Dendritic cell treated with granulocyte-macrophage colony-stimulating factor and Interleukin-4, amounts not matched to agents 40 ng/mL and 50 ng/mL, for 4 days (primary cell): ENCODE measurements at regions of chr16 and their contacts with region 1.

Region 1: DNA sequence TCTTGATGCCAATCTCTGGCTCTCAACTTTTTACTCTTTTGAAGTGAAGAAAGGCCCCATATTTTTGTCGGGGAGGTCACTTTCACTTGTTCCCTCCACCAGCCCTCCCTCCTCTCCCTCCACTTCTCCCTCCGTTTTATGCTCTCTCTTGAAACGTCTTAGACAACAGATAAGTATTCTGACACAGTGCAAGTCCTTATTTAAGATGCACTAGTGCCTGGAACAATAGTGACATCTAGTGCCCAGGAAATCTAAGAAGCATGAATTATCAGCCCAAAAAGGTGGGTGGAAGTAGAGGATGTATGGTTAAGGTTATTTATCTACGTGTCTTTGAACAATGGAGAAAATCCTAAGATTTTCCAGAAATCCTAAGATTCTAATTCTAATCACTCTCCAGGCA is 17.9 kb downstream of the PSME3IP1 start:
- H3K4me3 Mint-ChIP-seq: no peak overlapping the region
- H3K27ac Mint-ChIP-seq: no peak overlapping the region
- H3K4me1 Mint-ChIP-seq: peaks cover 24% of the 10 kb centered on the region
- H3K27me3 Mint-ChIP-seq: no peaks in the 10 kb centered on the region

Region 2: GRCh38 chr16:56964243-56965148 is 203.5 kb before region 1 on chr16:
- intact Hi-C with region 1: loop called (anchors 10 kb)
- H3K4me3 Mint-ChIP-seq: no peak overlapping the region
- H3K27ac Mint-ChIP-seq: peak overlapping the region; percentile 76
- H3K4me1 Mint-ChIP-seq: peaks cover 72% of the 10 kb centered on the region
- H3K27me3 Mint-ChIP-seq: peaks cover 2% of the 10 kb centered on the region

Region 3: DNA sequence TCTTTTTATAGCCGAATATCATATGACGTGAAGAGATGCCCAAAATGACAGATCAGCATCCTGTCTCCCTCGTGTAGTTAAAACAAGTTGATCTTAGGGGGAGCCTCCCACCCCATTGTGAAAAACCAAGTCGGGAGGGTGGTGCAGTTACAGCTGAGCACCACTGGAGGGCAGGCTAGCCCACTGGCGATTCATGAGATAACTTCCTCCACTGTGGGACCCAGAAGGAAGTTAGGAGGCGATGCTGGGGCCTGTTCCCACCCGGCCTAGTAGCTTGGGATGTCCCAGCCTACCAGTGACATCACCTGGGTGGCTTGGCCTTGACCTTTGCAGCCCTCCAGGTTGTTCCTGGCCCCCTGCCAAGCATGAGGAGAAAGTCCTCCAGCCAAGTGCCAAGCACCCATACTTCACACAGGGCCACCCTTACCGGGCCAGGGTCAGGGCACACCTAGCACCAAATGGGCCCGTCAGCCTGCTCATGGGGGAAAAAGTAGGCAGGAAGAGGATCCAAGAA is 83.6 kb before region 1 on chr16:
- intact Hi-C with region 1: loop called (anchors 1 kb)
- H3K4me3 Mint-ChIP-seq: no peak overlapping the region
- H3K27ac Mint-ChIP-seq: no peak overlapping the region
- H3K4me1 Mint-ChIP-seq: peaks cover 16% of the 10 kb centered on the region
- H3K27me3 Mint-ChIP-seq: no peaks in the 10 kb centered on the region